ENCODE measurements at regions of chr9 and their contacts with region 1.

Region 1: GRCh38 chr9:36818965-36819870 is 214.8 kb downstream of the PAX5 start:
- DNase-seq: no peak
- ATAC-seq: no peak
- H3K4me3 Mint-ChIP-seq: no peak overlapping the region
- H3K27ac Mint-ChIP-seq: no peak overlapping the region
- H3K4me1 Mint-ChIP-seq: no peaks in the 10 kb centered on the region
- H3K27me3 Mint-ChIP-seq: peaks cover 15% of the 10 kb centered on the region

Region 2: DNA sequence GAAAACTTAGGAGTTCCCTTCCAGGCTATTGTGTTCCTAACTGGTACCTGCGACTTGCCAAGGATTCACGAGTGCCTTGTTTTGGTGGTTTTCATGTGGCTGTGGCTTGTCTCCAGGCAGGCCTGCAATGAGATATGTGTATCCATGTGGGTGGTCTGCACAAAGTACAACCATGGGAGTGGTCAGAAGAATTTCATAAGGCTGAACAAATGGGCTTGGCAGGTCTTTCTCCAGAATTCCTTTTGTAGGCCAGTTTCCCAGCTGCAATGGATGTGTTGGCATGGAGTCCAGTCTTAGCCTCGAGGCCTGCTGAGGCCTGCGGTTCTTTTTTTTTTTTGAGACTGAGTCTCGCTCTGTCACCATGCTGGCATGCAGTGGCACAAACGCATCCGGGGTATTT is 275.3 kb before region 1 on chr9:
- CTCF ChIA-PET with region 1: no interaction called
- POLR2A ChIA-PET with region 1: no interaction called
- intact Hi-C with region 1: no loop called
- DNase-seq: no peak
- ATAC-seq: no peak
- H3K4me3 Mint-ChIP-seq: no peak overlapping the region
- H3K27ac Mint-ChIP-seq: no peak overlapping the region
- H3K4me1 Mint-ChIP-seq: no peaks in the 10 kb centered on the region
- H3K27me3 Mint-ChIP-seq: peaks cover 5% of the 10 kb centered on the region

Region 3: GRCh38 chr9:36903541-36904435 is 84.6 kb after region 1 on chr9:
- CTCF ChIA-PET with region 1: no interaction called
- POLR2A ChIA-PET with region 1: no interaction called
- intact Hi-C with region 1: no loop called
- DNase-seq: peak; percentile 66
- ATAC-seq: peak; percentile 79
- H3K4me3 Mint-ChIP-seq: no peak overlapping the region
- H3K27ac Mint-ChIP-seq: no peak overlapping the region
- H3K4me1 Mint-ChIP-seq: no peaks in the 10 kb centered on the region
- H3K27me3 Mint-ChIP-seq: peaks cover 16% of the 10 kb centered on the region

Region 4: DNA sequence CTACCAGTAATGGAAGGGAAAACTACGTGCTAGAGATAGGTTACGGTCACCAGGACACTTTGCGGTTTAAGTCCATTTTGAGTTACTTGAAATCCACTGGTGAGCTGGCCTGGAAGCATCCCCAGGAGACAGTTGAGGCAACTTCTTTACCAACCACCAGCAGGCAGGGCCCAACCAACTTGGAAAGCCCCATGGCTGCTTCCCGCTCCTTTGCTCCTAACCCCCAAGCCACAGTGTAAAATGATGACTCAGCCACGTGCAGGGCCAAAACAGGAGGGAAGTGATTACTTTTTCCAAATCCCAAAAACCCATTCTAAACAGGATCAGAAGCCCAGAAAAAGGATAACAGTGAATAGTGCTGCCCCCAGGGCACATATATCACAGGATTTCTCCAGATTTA is 127.4 kb after region 1 on chr9:
- CTCF ChIA-PET with region 1: no interaction called
- POLR2A ChIA-PET with region 1: no interaction called
- intact Hi-C with region 1: loop called in 1 of 2 experiments (anchors 10 kb)
- DNase-seq: no peak
- ATAC-seq: no peak
- H3K4me3 Mint-ChIP-seq: no peak overlapping the region
- H3K27ac Mint-ChIP-seq: no peak overlapping the region
- H3K4me1 Mint-ChIP-seq: no peaks in the 10 kb centered on the region
- H3K27me3 Mint-ChIP-seq: peaks cover 13% of the 10 kb centered on the region